Dendritic cell treated with granulocyte-macrophage colony-stimulating factor and Interleukin-4, amounts not matched to agents 40 ng/mL and 50 ng/mL, for 4 days (primary cell): ENCODE measurements at regions of chr6 and their contacts with region 1.

Region 1: GRCh38 chr6:78995946-78996345 is 82.1 kb downstream of the PHIP start:
- H3K4me3 Mint-ChIP-seq: no peak overlapping the region
- H3K27ac Mint-ChIP-seq: no peak overlapping the region
- H3K4me1 Mint-ChIP-seq: no peaks in the 10 kb centered on the region
- H3K27me3 Mint-ChIP-seq: no peaks in the 10 kb centered on the region

Region 2: DNA sequence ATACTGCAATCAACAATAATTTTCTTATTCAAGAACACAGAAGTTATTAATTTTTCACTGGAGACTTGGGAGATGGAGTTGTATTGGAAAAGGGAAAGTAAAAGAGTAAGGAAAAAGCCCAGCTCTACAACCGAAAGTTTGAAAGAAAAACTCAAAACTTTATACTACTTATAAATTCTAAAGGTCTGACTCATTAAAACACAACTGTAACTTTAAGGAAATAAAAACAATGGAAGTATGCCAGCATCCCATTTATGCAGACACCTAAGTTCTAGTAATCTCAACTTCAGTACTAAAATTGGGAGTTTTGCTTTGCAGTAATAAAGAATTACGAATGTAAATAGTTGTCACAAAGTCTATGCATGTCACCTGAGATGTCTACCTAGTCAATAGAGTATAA is 48.0 kb before region 1 on chr6:
- intact Hi-C with region 1: loop called (anchors 10 kb)
- H3K4me3 Mint-ChIP-seq: no peak overlapping the region
- H3K27ac Mint-ChIP-seq: no peak overlapping the region
- H3K4me1 Mint-ChIP-seq: peaks cover 9% of the 10 kb centered on the region
- H3K27me3 Mint-ChIP-seq: no peaks in the 10 kb centered on the region

Region 3: DNA sequence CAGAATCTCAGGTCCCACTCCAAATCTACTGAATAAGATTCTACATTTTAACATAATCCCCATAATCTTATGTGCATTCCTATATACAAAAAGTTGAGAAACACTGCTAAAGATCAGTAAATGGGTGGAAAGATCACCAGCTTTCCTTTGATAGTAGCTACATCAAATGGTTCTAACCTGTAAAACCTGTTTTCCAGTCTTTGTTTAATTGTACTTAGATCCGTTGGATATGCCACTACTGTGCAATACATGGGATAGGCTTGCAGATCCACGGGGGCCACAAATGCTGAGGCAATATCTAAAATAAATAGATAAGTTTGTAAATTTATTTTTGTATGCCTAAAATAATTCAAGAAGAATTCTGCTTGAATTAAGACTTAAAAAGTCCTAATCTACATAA is 34.4 kb before region 1 on chr6:
- intact Hi-C with region 1: loop called (anchors 5 kb)
- H3K4me3 Mint-ChIP-seq: no peak overlapping the region
- H3K27ac Mint-ChIP-seq: no peak overlapping the region
- H3K4me1 Mint-ChIP-seq: peaks cover 7% of the 10 kb centered on the region
- H3K27me3 Mint-ChIP-seq: no peaks in the 10 kb centered on the region

Region 4: GRCh38 chr6:79034865-79035264 is 38.9 kb after region 1 on chr6:
- intact Hi-C with region 1: no loop called
- H3K4me3 Mint-ChIP-seq: no peak overlapping the region
- H3K27ac Mint-ChIP-seq: no peak overlapping the region
- H3K4me1 Mint-ChIP-seq: peaks cover 30% of the 10 kb centered on the region
- H3K27me3 Mint-ChIP-seq: no peaks in the 10 kb centered on the region